Endothelial cell of umbilical vein (primary cell): ENCODE measurements at regions of chr10 and their contacts with region 1.

Region 1: DNA sequence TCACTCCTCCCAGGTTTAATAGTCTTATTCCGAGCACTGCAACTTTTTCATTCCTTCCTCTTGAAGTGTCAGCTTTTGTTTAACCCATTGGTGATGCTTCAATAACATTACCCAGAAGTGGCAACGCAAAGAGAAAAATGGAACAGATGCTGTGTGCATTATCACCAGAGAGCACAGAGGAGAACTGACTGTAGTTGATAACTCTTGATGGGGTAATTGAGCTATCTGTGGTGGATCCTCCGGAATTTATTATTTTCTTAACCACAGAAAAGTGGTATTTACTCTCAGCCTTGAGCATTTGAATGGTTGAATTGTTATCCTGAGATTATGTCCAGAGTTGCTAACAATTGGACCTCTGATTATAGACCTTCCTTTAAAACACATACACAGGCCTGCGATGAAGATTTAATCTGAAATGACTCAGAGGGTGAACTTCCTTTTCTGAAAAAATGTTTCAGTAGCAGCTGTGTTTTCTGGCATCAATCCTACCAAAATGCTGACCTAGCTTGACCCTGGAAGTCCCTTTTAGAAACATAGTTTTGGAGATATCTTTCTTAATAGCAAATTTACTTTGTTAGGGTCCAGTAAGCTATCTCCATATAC is 1584.4 kb upstream of the LRRTM3 start:
- DNase-seq: peak; percentile 97
- H3K4me3 ChIP-seq: peak overlapping the region in 1 of 3 experiments; percentile 15
- H3K27ac ChIP-seq: peak overlapping the region; percentile 93
- H3K4me1 ChIP-seq: peaks cover 37% of the 10 kb centered on the region
- H3K27me3 ChIP-seq: no peaks in the 10 kb centered on the region
- CTCF ChIP-seq: no peak
- POLR2A ChIP-seq: peak; percentile 44

Region 2: GRCh38 chr10:64873959-64874358 is 467.5 kb before region 1 on chr10:
- CTCF ChIA-PET with region 1: interaction called, 3 read pairs
- POLR2A ChIA-PET with region 1: no interaction called
- dilution Hi-C with region 1: no loop called
- intact Hi-C with region 1: loop called (anchors 2 kb)
- DNase-seq: peak; percentile 25
- H3K4me3 ChIP-seq: no peak overlapping the region
- H3K27ac ChIP-seq: peak overlapping the region; percentile 69
- H3K4me1 ChIP-seq: peaks cover 25% of the 10 kb centered on the region
- H3K27me3 ChIP-seq: no peaks in the 10 kb centered on the region
- CTCF ChIP-seq: no peak
- POLR2A ChIP-seq: no peak

Region 3: GRCh38 chr10:65328486-65328885 is 12.9 kb before region 1 on chr10:
- CTCF ChIA-PET with region 1: interaction called, 15 read pairs
- POLR2A ChIA-PET with region 1: no interaction called
- dilution Hi-C with region 1: no loop called
- intact Hi-C with region 1: loop called (anchors 1 kb)
- DNase-seq: peak; percentile 57
- H3K4me3 ChIP-seq: no peak overlapping the region
- H3K27ac ChIP-seq: peak overlapping the region; percentile 53
- H3K4me1 ChIP-seq: peaks cover 18% of the 10 kb centered on the region
- H3K27me3 ChIP-seq: no peaks in the 10 kb centered on the region
- CTCF ChIP-seq: no peak
- POLR2A ChIP-seq: no peak

Region 4: DNA sequence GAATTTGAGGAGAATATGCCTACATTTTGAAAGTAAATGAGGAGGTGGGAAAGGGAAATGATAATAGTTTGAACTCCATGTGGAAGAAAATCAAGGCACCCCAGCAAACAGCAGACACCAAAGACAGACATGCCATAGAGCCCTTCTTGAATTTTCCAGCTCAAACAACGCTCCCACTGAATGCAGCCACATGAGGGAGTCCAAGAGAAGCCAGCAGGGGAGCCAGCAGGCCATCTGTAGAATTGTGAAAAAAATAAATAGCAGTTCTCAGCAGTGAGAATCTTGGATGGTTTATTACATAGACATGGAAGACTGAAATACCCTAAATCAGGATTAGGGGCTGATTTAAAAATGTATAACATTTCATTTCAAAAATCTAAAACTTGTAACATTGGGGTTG is 17.1 kb after region 1 on chr10:
- CTCF ChIA-PET with region 1: interaction called, 17 read pairs
- POLR2A ChIA-PET with region 1: interaction called, 3 read pairs
- dilution Hi-C with region 1: no loop called
- intact Hi-C with region 1: loop called (anchors 1 kb)
- DNase-seq: peak; percentile 52
- H3K4me3 ChIP-seq: no peak overlapping the region
- H3K27ac ChIP-seq: no peak overlapping the region
- H3K4me1 ChIP-seq: peaks cover 16% of the 10 kb centered on the region
- H3K27me3 ChIP-seq: no peaks in the 10 kb centered on the region
- CTCF ChIP-seq: peak; percentile 36 to 68
- POLR2A ChIP-seq: no peak